ENCODE measurements at regions of chr2 and their contacts with region 1.

Region 1: DNA sequence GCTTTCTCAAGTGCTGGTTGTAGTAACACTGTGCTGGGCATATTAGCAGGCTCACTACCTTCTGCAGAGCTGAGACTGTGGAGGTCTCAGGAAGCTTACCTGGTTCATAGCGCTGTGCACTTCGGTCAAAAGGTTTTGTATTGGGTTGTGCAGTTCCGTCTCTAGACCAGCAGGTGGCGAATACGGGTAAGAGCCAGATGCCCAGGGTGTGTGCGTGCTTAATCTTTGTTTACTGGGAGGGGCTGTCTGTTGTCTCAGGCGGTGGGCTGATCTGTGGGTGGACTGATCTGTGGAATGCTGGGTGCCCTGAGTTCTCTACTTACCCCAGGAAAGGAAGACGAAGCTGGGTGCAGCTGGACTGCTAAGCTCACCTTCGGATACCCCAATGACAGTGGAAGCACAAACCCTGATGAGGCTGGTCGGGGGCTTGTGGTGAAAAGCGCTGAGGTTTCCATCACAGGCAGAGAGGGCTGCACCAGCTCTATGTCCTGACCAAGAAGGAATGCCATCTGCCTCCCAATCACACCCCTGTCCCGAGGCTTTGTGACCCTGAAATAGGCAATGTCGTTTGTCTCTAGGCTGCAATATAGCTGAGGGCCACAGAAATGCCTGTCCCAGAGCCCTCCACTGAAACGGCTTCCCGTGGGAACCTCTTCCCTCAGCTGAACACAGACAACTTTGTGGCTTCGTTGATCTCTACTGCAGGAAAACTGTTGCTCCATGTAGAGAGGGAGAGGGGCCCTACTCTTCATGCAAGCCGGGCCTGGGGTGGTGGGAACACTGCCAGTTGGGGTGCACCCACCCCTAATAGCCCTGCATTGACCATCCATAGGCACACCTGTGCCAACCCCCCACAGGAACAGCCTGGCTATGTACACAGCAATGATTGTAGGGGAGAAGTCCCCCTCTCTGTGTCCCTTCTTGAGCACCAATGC is 45.9 kb upstream of the FAM117B start:
- DNase-seq: peak; percentile 32 to 82 (median 77)
- ATAC-seq: peak; percentile 96
- H3K4me3 ChIP-seq: no peak overlapping the region
- H3K4me3 Mint-ChIP-seq: peak overlapping the region in 9 of 10 donors; percentile 3 to 76 (median 42)
- H3K27ac ChIP-seq: no peak overlapping the region
- H3K27ac Mint-ChIP-seq: peak overlapping the region in 5 of 9 donors; percentile 7 to 78 (median 64)
- H3K4me1 ChIP-seq: peaks cover 0 to 4% of the 10 kb centered on the region in 2 donors
- H3K4me1 Mint-ChIP-seq: peaks cover 5 to 15% (median 11%) of the 10 kb centered on the region in 7 donors
- H3K27me3 ChIP-seq: no peaks in the 10 kb centered on the region
- H3K27me3 Mint-ChIP-seq: no peaks in the 10 kb centered on the region

Region 2: DNA sequence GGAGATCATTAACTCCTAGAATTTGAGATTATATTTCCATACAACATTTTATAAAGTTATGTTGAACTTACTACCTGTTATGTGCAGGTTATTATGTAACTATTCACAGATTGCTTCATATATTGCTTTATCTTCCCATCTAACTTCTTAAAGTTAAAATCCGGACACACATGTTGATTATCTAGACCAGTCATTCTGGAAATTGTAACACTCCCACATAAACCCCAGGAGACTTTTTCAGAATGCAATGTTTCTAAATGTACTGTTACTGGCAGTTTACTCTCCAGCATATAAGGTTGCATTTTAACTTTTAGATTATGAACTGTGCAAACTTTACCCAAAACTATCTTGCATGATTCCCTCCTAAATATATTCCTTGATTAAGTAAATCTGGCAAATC is 24.7 kb before region 1 on chr2:
- CTCF ChIA-PET with region 1: no interaction called
- POLR2A ChIA-PET with region 1: no interaction called
- intact Hi-C with region 1: no loop called
- DNase-seq: no peak
- ATAC-seq: no peak
- H3K4me3 ChIP-seq: no peak overlapping the region
- H3K4me3 Mint-ChIP-seq: no peak overlapping the region
- H3K27ac ChIP-seq: no peak overlapping the region
- H3K27ac Mint-ChIP-seq: no peak overlapping the region
- H3K4me1 ChIP-seq: no peaks in the 10 kb centered on the region
- H3K4me1 Mint-ChIP-seq: no peaks in the 10 kb centered on the region
- H3K27me3 ChIP-seq: no peaks in the 10 kb centered on the region
- H3K27me3 Mint-ChIP-seq: no peaks in the 10 kb centered on the region

Region 3: GRCh38 chr2:202577250-202578183 is 11.4 kb before region 1 on chr2:
- CTCF ChIA-PET with region 1: interaction called, 4 read pairs
- POLR2A ChIA-PET with region 1: no interaction called
- intact Hi-C with region 1: loop called in 1 of 2 experiments (anchors 2 kb)
- DNase-seq: no peak
- ATAC-seq: no peak
- H3K4me3 ChIP-seq: no peak overlapping the region
- H3K4me3 Mint-ChIP-seq: no peak overlapping the region
- H3K27ac ChIP-seq: no peak overlapping the region
- H3K27ac Mint-ChIP-seq: peak overlapping the region in 2 of 9 donors; percentile 38 to 53
- H3K4me1 ChIP-seq: no peaks in the 10 kb centered on the region
- H3K4me1 Mint-ChIP-seq: peaks cover 0 to 2% (median 0%) of the 10 kb centered on the region in 7 donors
- H3K27me3 ChIP-seq: no peaks in the 10 kb centered on the region
- H3K27me3 Mint-ChIP-seq: no peaks in the 10 kb centered on the region

Region 4: DNA sequence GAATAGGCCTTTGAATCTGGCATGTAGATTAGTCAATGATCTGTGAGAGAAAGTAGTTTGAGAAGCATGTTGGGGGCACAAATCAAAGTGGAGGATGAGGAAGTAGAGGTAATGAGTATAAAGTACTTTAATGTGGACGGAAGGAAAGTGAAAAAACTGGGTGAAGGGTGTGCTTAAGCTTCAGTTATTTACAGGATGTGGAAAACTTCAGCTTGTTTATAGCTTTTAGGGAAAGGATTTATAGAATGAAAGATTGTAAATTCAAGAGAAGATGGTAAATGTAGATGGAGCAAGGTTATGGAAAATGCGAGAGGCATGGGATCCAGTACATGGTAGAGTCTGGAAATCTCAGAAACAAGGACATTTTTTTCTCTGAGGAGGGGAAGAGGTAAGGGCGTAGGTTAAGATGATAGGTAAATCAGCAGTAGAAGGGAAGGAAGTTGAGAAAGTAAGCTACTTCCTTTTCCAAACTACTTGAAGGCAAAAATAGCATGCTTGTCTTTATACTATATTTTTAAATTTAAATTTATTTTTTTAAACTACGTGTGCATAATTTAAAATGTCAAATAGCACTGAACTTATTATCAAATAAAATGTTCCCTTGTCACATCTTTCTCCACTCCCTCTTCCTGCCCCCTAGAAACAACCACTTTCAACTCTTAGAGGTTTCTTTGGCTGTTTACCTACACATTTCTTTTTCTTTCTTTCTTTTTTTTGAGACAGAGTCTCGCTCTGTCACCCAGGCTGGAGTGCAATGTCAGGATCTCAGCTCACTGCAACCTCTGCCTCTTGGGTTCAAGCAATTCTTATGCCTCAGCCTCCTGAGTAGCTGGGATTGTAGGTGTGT is 54.3 kb after region 1 on chr2:
- CTCF ChIA-PET with region 1: no interaction called
- POLR2A ChIA-PET with region 1: interaction called, 4 read pairs
- intact Hi-C with region 1: loop called in 1 of 2 experiments (anchors 2 kb)
- DNase-seq: peak in 7 of 9 donors; percentile 63 to 85 (median 79)
- ATAC-seq: peak; percentile 76
- H3K4me3 ChIP-seq: peak overlapping the region; percentile 44
- H3K4me3 Mint-ChIP-seq: peak overlapping the region in 6 of 10 donors; percentile 74 to 86 (median 79)
- H3K27ac ChIP-seq: peak overlapping the region; percentile 65
- H3K27ac Mint-ChIP-seq: peak overlapping the region in 5 of 9 donors; percentile 84 to 91 (median 86)
- H3K4me1 ChIP-seq: peaks cover 19 to 55% of the 10 kb centered on the region in 2 donors
- H3K4me1 Mint-ChIP-seq: peaks cover 31 to 72% (median 58%) of the 10 kb centered on the region in 7 donors
- H3K27me3 ChIP-seq: no peaks in the 10 kb centered on the region
- H3K27me3 Mint-ChIP-seq: no peaks in the 10 kb centered on the region

Region 5: DNA sequence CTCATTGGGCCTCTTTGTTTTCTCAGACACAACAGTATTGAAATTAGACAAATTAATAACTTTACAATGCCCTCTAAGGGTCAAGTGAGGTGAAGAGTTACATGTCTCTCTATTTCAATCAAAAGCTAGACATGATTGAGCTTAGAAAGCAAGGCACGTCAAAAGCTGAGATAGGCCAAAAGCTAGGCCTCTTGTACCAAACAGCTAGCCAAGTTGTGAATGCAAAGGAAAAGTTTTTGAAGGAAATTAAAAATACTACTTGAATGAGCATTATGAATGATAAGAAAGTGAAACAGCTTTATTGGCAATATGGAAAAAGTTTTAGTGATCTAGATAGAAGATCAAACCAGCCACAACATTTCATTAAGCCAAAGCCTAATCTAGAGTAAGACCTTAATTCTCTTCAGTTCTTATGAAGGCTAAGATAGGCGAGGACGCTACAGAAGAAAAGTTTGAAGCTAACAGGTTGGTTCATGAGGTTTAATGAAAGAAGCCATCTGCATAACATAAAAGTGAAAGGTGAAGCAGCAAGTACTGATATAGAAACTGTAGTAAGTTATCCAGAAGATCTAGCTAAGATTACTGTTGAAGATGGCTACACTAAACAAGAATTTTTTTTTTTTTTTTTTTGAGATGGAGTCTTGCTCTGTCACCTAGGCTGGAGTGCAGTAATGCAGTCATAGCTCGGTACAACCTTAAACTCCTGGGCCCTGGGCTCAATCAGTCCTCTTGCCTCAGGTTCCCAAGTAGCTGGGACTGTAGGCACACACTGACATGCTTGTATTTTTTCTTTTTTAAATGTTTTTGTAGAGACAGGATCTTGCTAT is 111.4 kb after region 1 on chr2:
- CTCF ChIA-PET with region 1: interaction called, 6 read pairs
- POLR2A ChIA-PET with region 1: no interaction called
- intact Hi-C with region 1: loop called in 1 of 2 experiments (anchors 1 kb)
- DNase-seq: peak in 4 of 9 donors; percentile 11 to 33 (median 22)
- ATAC-seq: peak; percentile 57
- H3K4me3 ChIP-seq: no peak overlapping the region
- H3K4me3 Mint-ChIP-seq: peak overlapping the region; percentile 12 to 68 (median 54)
- H3K27ac ChIP-seq: peak overlapping the region; percentile 27
- H3K27ac Mint-ChIP-seq: peak overlapping the region; percentile 60 to 92 (median 83)
- H3K4me1 ChIP-seq: peaks cover 0 to 14% of the 10 kb centered on the region in 2 donors
- H3K4me1 Mint-ChIP-seq: peaks cover 30 to 73% (median 65%) of the 10 kb centered on the region in 7 donors
- H3K27me3 ChIP-seq: no peaks in the 10 kb centered on the region
- H3K27me3 Mint-ChIP-seq: no peaks in the 10 kb centered on the region

Region 6: DNA sequence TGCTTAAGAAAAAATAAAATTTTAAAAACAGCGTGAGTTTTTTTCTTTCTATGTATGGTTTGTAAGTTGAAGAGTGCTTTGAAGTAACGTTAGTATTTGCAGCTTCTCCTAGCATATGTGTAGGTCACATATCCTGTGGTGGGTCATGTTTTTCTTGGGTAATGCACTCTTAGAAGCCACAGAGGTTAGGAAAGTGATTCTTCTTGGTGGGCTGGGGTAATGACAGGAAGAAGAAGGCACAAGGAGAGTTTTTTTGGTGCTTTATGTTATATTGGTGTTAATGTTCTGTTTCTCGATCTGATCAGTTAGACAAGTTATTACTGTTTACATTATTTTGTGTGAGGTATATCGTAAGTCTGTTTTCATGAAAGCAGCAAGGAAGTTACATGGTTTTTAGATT is 173.6 kb after region 1 on chr2:
- CTCF ChIA-PET with region 1: interaction called, 3 read pairs
- POLR2A ChIA-PET with region 1: interaction called, 3 read pairs
- intact Hi-C with region 1: loop called (anchors 1 kb)
- DNase-seq: peak in 7 of 9 donors; percentile 11 to 73 (median 47)
- ATAC-seq: peak; percentile 90
- H3K4me3 ChIP-seq: no peak overlapping the region
- H3K4me3 Mint-ChIP-seq: peak overlapping the region; percentile 30 to 87 (median 66)
- H3K27ac ChIP-seq: peak overlapping the region; percentile 52
- H3K27ac Mint-ChIP-seq: peak overlapping the region; percentile 79 to 98 (median 88)
- H3K4me1 ChIP-seq: peaks cover 0 to 27% of the 10 kb centered on the region in 2 donors
- H3K4me1 Mint-ChIP-seq: peaks cover 21 to 74% (median 50%) of the 10 kb centered on the region in 7 donors
- H3K27me3 ChIP-seq: no peaks in the 10 kb centered on the region
- H3K27me3 Mint-ChIP-seq: no peaks in the 10 kb centered on the region

Region 7: GRCh38 chr2:202801544-202801943 is 212.6 kb after region 1 on chr2:
- CTCF ChIA-PET with region 1: no interaction called
- POLR2A ChIA-PET with region 1: no interaction called
- intact Hi-C with region 1: no loop called
- DNase-seq: no peak
- ATAC-seq: no peak
- H3K4me3 ChIP-seq: no peak overlapping the region
- H3K4me3 Mint-ChIP-seq: no peak overlapping the region
- H3K27ac ChIP-seq: no peak overlapping the region
- H3K27ac Mint-ChIP-seq: peak overlapping the region in 2 of 9 donors; percentile 15 to 43
- H3K4me1 ChIP-seq: no peaks in the 10 kb centered on the region
- H3K4me1 Mint-ChIP-seq: peaks cover 0 to 12% (median 0%) of the 10 kb centered on the region in 7 donors
- H3K27me3 ChIP-seq: no peaks in the 10 kb centered on the region
- H3K27me3 Mint-ChIP-seq: no peaks in the 10 kb centered on the region

Region 8: GRCh38 chr2:202870431-202871299 is 281.8 kb after region 1 on chr2:
- CTCF ChIA-PET with region 1: interaction called, 33 read pairs
- POLR2A ChIA-PET with region 1: no interaction called
- intact Hi-C with region 1: loop called (anchors 1 kb)
- DNase-seq: peak; percentile 32 to 68 (median 57)
- ATAC-seq: peak; percentile 85
- H3K4me3 ChIP-seq: peak overlapping the region; percentile 84
- H3K4me3 Mint-ChIP-seq: peak overlapping the region; percentile 89 to 98 (median 94)
- H3K27ac ChIP-seq: peak overlapping the region; percentile 60
- H3K27ac Mint-ChIP-seq: peak overlapping the region in 7 of 9 donors; percentile 8 to 84 (median 66)
- H3K4me1 ChIP-seq: peaks cover 0 to 3% of the 10 kb centered on the region in 2 donors
- H3K4me1 Mint-ChIP-seq: peaks cover 0 to 13% (median 7%) of the 10 kb centered on the region in 7 donors
- H3K27me3 ChIP-seq: no peaks in the 10 kb centered on the region
- H3K27me3 Mint-ChIP-seq: no peaks in the 10 kb centered on the region

Region 9: GRCh38 chr2:203014456-203015199 is 425.7 kb after region 1 on chr2 and contains the start of gene NBEAL1:
- CTCF ChIA-PET with region 1: no interaction called
- POLR2A ChIA-PET with region 1: no interaction called
- intact Hi-C with region 1: loop called in 1 of 2 experiments (anchors 5 kb)
- DNase-seq: peak; percentile 88 to 99 (median 90)
- ATAC-seq: peak; percentile 95
- H3K4me3 ChIP-seq: peak within 1 kb of the TSS; percentile 92
- H3K4me3 Mint-ChIP-seq: peak within 1 kb of the TSS; percentile 90 to 97 (median 95)
- H3K27ac ChIP-seq: peak within 1 kb of the TSS; percentile 92
- H3K27ac Mint-ChIP-seq: peak within 1 kb of the TSS; percentile 84 to 98 (median 94)
- H3K4me1 ChIP-seq: peaks cover 5 to 14% of the 10 kb centered on the region in 2 donors
- H3K4me1 Mint-ChIP-seq: peaks cover 18 to 48% (median 41%) of the 10 kb centered on the region in 7 donors
- H3K27me3 ChIP-seq: no peaks in the 10 kb centered on the region
- H3K27me3 Mint-ChIP-seq: peaks cover 0 to 19% (median 0%) of the 10 kb centered on the region in 5 donors
- total RNA-seq, gene NBEAL1: 11.6 to 15.9 (median 12.6) TPM

Region 10: GRCh38 chr2:203071148-203071547 is 482.2 kb after region 1 on chr2:
- CTCF ChIA-PET with region 1: no interaction called
- POLR2A ChIA-PET with region 1: no interaction called
- intact Hi-C with region 1: no loop called
- DNase-seq: no peak
- ATAC-seq: no peak
- H3K4me3 ChIP-seq: no peak overlapping the region
- H3K4me3 Mint-ChIP-seq: no peak overlapping the region
- H3K27ac ChIP-seq: no peak overlapping the region
- H3K27ac Mint-ChIP-seq: no peak overlapping the region
- H3K4me1 ChIP-seq: no peaks in the 10 kb centered on the region
- H3K4me1 Mint-ChIP-seq: no peaks in the 10 kb centered on the region
- H3K27me3 ChIP-seq: no peaks in the 10 kb centered on the region
- H3K27me3 Mint-ChIP-seq: no peaks in the 10 kb centered on the region